Naive thymus-derived CD4-positive, alpha-beta T cell (primary cell): ENCODE measurements at regions of chr9 and their contacts with region 1.

Region 1: GRCh38 chr9:7135735-7136134 is 378.0 kb downstream of the KDM4C start:
- DNase-seq: no peak
- ATAC-seq: no peak
- H3K4me3 ChIP-seq: no peak overlapping the region
- H3K4me3 Mint-ChIP-seq: no peak overlapping the region
- H3K27ac ChIP-seq: no peak overlapping the region
- H3K27ac Mint-ChIP-seq: no peak overlapping the region
- H3K4me1 ChIP-seq: no peaks in the 10 kb centered on the region
- H3K4me1 Mint-ChIP-seq: peaks cover 0 to 3% (median 0%) of the 10 kb centered on the region in 7 donors
- H3K27me3 ChIP-seq: no peaks in the 10 kb centered on the region
- H3K27me3 Mint-ChIP-seq: no peaks in the 10 kb centered on the region

Region 2: DNA sequence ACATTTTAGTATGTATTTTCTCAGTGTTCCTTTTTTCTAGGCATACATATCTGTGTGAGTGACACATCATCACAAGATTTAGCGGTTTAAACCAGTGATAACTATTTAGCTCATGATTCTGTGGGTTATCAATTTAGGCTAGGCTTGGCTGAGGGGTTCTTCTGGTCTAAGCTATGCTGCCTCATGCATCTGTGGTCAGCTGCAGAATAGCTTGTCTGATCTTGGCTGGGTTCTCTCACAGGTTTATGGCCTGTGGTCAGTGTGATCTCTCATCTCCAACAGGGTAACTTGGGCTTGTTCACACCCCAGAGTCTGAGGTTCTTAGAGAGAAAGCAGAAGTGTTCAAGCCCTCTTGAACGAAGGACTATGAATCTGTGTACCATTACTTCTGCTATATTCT is 14.7 kb before region 1 on chr9:
- CTCF ChIA-PET with region 1: no interaction called
- POLR2A ChIA-PET with region 1: no interaction called
- intact Hi-C with region 1: loop called in 1 of 2 experiments (anchors 2 kb)
- DNase-seq: no peak
- ATAC-seq: peak; percentile 82
- H3K4me3 ChIP-seq: no peak overlapping the region
- H3K4me3 Mint-ChIP-seq: peak overlapping the region in 1 of 10 donors; percentile 38
- H3K27ac ChIP-seq: no peak overlapping the region
- H3K27ac Mint-ChIP-seq: peak overlapping the region in 4 of 9 donors; percentile 8 to 56 (median 49)
- H3K4me1 ChIP-seq: peaks cover 5 to 8% of the 10 kb centered on the region in 2 donors
- H3K4me1 Mint-ChIP-seq: peaks cover 18 to 52% (median 44%) of the 10 kb centered on the region in 7 donors
- H3K27me3 ChIP-seq: no peaks in the 10 kb centered on the region
- H3K27me3 Mint-ChIP-seq: no peaks in the 10 kb centered on the region